Activated CD8-positive, alpha-beta T cell treated with anti-CD3 and anti-CD28 coated beads for 36 hours (primary cell): ENCODE measurements at regions of chr12 and their contacts with region 1.

Region 1: GRCh38 chr12:8890313-8891085 is 23.8 kb upstream of the PHC1 start:
- DNase-seq: peak; percentile 66
- ATAC-seq: peak; percentile 88
- H3K4me3 Mint-ChIP-seq: peak overlapping the region; percentile 75
- H3K27ac Mint-ChIP-seq: peak overlapping the region; percentile 21
- H3K4me1 Mint-ChIP-seq: peaks cover 13% of the 10 kb centered on the region
- H3K27me3 Mint-ChIP-seq: no peaks in the 10 kb centered on the region
- CTCF ChIP-seq: peak; percentile 96

Region 2: DNA sequence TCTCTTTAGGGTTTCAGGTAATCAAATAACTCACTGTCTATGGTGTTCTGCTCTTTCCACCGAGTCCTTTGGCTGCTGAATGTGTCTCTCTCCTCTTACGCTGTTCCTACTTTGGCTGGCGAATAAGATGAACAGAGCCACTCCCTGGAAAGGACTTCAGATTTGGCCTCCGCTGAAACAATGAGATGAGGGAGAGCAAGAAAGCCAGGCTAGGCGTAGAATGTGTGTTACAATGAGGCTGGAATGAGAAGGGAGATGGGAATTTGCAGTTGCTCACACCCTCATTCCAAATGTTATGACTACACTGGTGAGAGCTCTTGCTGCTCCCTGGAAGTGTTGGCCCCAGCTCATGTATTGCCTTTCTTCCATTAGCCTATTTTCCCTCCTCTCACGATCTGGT is 227.9 kb before region 1 on chr12 and contains the start of gene MFAP5:
- CTCF ChIA-PET with region 1: interaction called, 23 read pairs
- POLR2A ChIA-PET with region 1: no interaction called
- intact Hi-C with region 1: loop called (anchors 10 kb)
- DNase-seq: no peak
- ATAC-seq: no peak
- H3K4me3 Mint-ChIP-seq: no peak within 1 kb of the TSS
- H3K27ac Mint-ChIP-seq: no peak within 1 kb of the TSS
- H3K4me1 Mint-ChIP-seq: no peaks in the 10 kb centered on the region
- H3K27me3 Mint-ChIP-seq: peaks cover 4% of the 10 kb centered on the region
- CTCF ChIP-seq: no peak
- total RNA-seq, gene MFAP5: not detected

Region 3: GRCh38 chr12:8701046-8701660 is 189.3 kb before region 1 on chr12:
- CTCF ChIA-PET with region 1: interaction called, 12 read pairs
- POLR2A ChIA-PET with region 1: no interaction called
- intact Hi-C with region 1: no loop called
- DNase-seq: no peak
- ATAC-seq: no peak
- H3K4me3 Mint-ChIP-seq: no peak overlapping the region
- H3K27ac Mint-ChIP-seq: no peak overlapping the region
- H3K4me1 Mint-ChIP-seq: peaks cover 20% of the 10 kb centered on the region
- H3K27me3 Mint-ChIP-seq: peaks cover 2% of the 10 kb centered on the region
- CTCF ChIP-seq: no peak

Region 4: GRCh38 chr12:8771072-8771471 is 119.4 kb before region 1 on chr12:
- CTCF ChIA-PET with region 1: no interaction called
- POLR2A ChIA-PET with region 1: no interaction called
- intact Hi-C with region 1: no loop called
- DNase-seq: no peak
- ATAC-seq: no peak
- H3K4me3 Mint-ChIP-seq: no peak overlapping the region
- H3K27ac Mint-ChIP-seq: no peak overlapping the region
- H3K4me1 Mint-ChIP-seq: no peaks in the 10 kb centered on the region
- H3K27me3 Mint-ChIP-seq: no peaks in the 10 kb centered on the region
- CTCF ChIP-seq: no peak

Region 5: DNA sequence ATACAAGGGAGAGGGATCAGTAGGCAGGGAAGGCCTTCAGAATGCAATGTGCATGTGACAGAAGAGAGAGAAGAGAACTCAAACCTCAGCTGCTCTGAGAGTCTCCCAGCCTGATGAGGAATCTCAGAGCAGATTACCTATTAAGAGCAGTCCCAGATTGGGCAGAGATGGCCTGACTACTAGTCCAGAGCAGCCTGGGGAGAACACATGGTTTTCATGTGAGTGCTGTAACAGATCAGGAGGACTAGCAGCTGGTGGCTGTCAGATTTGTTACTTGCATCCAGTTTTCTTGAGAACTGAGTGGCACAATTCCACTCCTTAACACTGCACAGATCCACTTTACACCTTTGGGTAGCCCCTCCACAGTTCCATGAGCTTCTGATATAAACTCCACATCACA is 106.0 kb before region 1 on chr12:
- CTCF ChIA-PET with region 1: no interaction called
- POLR2A ChIA-PET with region 1: no interaction called
- intact Hi-C with region 1: no loop called
- DNase-seq: no peak
- ATAC-seq: no peak
- H3K4me3 Mint-ChIP-seq: no peak overlapping the region
- H3K27ac Mint-ChIP-seq: no peak overlapping the region
- H3K4me1 Mint-ChIP-seq: no peaks in the 10 kb centered on the region
- H3K27me3 Mint-ChIP-seq: no peaks in the 10 kb centered on the region
- CTCF ChIP-seq: no peak

Region 6: GRCh38 chr12:8870586-8870985 is 19.9 kb before region 1 on chr12:
- CTCF ChIA-PET with region 1: interaction called, 17 read pairs
- POLR2A ChIA-PET with region 1: no interaction called
- intact Hi-C with region 1: no loop called
- DNase-seq: no peak
- ATAC-seq: no peak
- H3K4me3 Mint-ChIP-seq: no peak overlapping the region
- H3K27ac Mint-ChIP-seq: no peak overlapping the region
- H3K4me1 Mint-ChIP-seq: no peaks in the 10 kb centered on the region
- H3K27me3 Mint-ChIP-seq: no peaks in the 10 kb centered on the region
- CTCF ChIP-seq: no peak

Region 7: GRCh38 chr12:8949342-8950220 is 59.1 kb after region 1 on chr12 and contains the start of gene M6PR:
- CTCF ChIA-PET with region 1: interaction called, 24 read pairs
- POLR2A ChIA-PET with region 1: no interaction called
- intact Hi-C with region 1: no loop called
- DNase-seq: peak; percentile 97
- ATAC-seq: peak; percentile 83
- H3K4me3 Mint-ChIP-seq: peak within 1 kb of the TSS; percentile 94
- H3K27ac Mint-ChIP-seq: peak within 1 kb of the TSS; percentile 90
- H3K4me1 Mint-ChIP-seq: peaks cover 55% of the 10 kb centered on the region
- H3K27me3 Mint-ChIP-seq: no peaks in the 10 kb centered on the region
- CTCF ChIP-seq: peak; percentile 43
- total RNA-seq, gene M6PR: 199 to 206 TPM

Region 8: DNA sequence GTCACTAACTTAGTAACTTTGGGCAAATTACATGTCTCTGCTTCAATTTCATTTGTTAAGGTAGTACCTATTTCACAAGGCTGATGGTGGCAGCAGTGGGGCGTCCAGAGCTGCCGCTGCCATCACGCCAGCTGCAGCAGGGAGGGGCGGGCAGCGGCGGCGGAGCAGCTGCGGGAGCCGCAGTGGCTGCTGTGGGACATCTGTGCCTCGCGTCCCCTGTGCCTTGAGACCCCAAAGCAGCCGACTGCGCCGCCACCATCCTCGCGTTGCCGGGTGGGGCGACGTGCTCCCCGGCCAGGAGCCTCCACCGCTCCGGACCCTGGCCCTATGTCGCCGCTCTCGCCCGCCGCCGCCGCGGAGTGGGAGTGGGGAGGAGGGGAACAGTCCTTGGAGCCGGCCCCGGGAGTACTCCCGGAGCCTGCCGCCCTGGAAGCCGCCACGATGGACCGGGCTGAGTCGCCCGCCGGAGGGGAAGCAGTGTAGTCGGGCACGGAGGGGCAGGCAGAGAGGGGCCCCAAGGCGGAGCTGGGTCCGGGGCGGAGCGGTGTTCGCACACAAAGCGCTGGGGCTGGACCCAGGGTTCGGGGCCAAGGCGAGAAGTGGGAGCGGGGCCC is 173.8 kb after region 1 on chr12:
- CTCF ChIA-PET with region 1: interaction called, 13 read pairs
- POLR2A ChIA-PET with region 1: no interaction called
- intact Hi-C with region 1: no loop called
- DNase-seq: peak; percentile 74
- ATAC-seq: peak; percentile 95
- H3K4me3 Mint-ChIP-seq: peak overlapping the region; percentile 71
- H3K27ac Mint-ChIP-seq: no peak overlapping the region
- H3K4me1 Mint-ChIP-seq: peaks cover 9% of the 10 kb centered on the region
- H3K27me3 Mint-ChIP-seq: peaks cover 2% of the 10 kb centered on the region
- CTCF ChIP-seq: no peak